Naive thymus-derived CD4-positive, alpha-beta T cell (primary cell): ENCODE measurements at regions of chr2 and their contacts with region 1.

Region 1: GRCh38 chr2:241149925-241150659 is at the start of gene PPP1R7:
- DNase-seq: peak; percentile 83 to 96 (median 93)
- ATAC-seq: peak; percentile 87
- H3K4me3 ChIP-seq: peak within 1 kb of the TSS; percentile 97
- H3K4me3 Mint-ChIP-seq: peak within 1 kb of the TSS; percentile 95 to 100 (median 98)
- H3K27ac ChIP-seq: peak within 1 kb of the TSS; percentile 71
- H3K27ac Mint-ChIP-seq: peak within 1 kb of the TSS; percentile 85 to 97 (median 94)
- H3K4me1 ChIP-seq: peaks cover 13 to 26% of the 10 kb centered on the region in 2 donors
- H3K4me1 Mint-ChIP-seq: peaks cover 33 to 58% (median 51%) of the 10 kb centered on the region in 7 donors
- H3K27me3 ChIP-seq: no peaks in the 10 kb centered on the region
- H3K27me3 Mint-ChIP-seq: no peaks in the 10 kb centered on the region
- total RNA-seq, gene PPP1R7: 39.2 to 105 (median 55.3) TPM

Region 2: DNA sequence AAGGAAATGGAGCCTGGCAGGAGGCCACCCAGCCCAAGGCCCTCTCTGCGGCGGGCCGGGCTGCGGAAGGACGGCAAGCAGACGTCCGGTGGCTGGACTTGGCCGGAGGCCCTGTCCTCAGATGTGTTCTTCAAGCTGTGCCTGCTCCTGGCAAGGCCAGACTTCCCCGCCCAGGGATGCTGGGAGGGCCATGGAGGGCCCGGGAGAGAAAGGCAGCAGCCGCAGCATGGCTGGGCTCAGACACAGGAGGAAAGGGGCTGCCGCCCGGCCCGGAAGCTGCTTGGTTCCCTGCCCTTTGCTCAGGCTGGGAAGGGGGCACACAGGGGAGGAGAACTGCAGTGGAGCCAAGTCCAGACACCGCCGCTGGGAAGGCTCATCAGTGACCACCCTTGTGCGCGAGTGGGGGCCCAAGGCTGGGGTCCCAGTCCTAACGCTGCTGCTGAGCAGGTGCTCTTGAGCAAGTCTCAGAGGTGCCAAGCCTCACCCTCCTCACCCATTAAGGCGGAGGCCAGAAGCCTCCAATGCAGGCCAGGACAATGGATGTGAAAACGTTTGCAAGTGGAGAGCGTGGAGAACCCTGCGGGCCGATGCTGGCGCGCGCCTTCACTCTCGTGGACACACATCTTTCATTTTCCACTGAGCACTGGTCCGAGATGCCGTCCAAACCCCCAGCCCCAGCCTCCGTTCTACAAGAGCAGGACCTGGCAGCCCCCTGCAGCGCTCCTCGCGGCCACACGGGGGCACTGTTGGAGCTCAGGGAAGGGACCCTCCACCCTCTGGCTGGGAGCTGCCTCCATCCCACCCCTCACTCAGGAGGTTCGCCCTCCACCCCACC is 236.1 kb before region 1 on chr2:
- CTCF ChIA-PET with region 1: interaction called, 10 read pairs
- POLR2A ChIA-PET with region 1: no interaction called
- intact Hi-C with region 1: loop called in 1 of 2 experiments (anchors 10 kb)
- DNase-seq: peak; percentile 29 to 72 (median 56)
- ATAC-seq: peak; percentile 63
- H3K4me3 ChIP-seq: no peak overlapping the region
- H3K4me3 Mint-ChIP-seq: no peak overlapping the region
- H3K27ac ChIP-seq: no peak overlapping the region
- H3K27ac Mint-ChIP-seq: no peak overlapping the region
- H3K4me1 ChIP-seq: no peaks in the 10 kb centered on the region
- H3K4me1 Mint-ChIP-seq: peaks cover 0 to 2% (median 0%) of the 10 kb centered on the region in 7 donors
- H3K27me3 ChIP-seq: peaks cover 3 to 4% of the 10 kb centered on the region in 2 donors
- H3K27me3 Mint-ChIP-seq: peaks cover 11 to 26% (median 15%) of the 10 kb centered on the region in 5 donors

Region 3: DNA sequence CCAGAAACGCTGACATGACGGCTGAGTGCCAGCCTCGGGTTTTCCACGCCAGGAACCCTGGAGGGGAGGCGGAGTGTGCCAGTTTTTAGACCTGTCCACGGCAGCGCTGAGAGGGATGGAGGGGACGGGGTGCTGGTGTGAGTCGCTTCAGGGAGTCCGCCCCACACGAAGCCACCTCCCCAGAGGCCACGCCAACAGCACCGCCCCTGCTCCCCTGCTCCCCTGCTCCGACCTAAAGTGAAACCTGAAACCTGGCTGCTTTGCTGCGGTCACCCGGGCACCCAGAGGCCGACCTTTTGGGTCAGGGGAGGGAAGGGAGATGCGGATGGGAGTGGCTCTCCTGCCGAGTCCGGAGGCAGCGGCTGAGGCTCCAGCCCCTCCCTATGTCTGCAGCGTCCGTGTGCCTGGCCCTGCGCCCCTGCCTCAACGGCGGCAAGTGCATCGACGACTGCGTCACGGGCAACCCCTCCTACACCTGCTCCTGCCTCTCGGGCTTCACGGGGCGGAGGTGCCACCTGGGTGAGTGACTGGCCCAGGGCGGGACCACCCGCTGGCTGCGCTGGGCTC is 113.6 kb before region 1 on chr2:
- CTCF ChIA-PET with region 1: no interaction called
- POLR2A ChIA-PET with region 1: no interaction called
- intact Hi-C with region 1: loop called (anchors 1 kb)
- DNase-seq: peak; percentile 31 to 83 (median 58)
- ATAC-seq: peak; percentile 72
- H3K4me3 ChIP-seq: peak overlapping the region; percentile 79
- H3K4me3 Mint-ChIP-seq: peak overlapping the region; percentile 60 to 88 (median 80)
- H3K27ac ChIP-seq: peak overlapping the region; percentile 66
- H3K27ac Mint-ChIP-seq: peak overlapping the region in 6 of 9 donors; percentile 49 to 91 (median 80)
- H3K4me1 ChIP-seq: peaks cover 7 to 10% of the 10 kb centered on the region in 2 donors
- H3K4me1 Mint-ChIP-seq: peaks cover 0 to 24% (median 6%) of the 10 kb centered on the region in 7 donors
- H3K27me3 ChIP-seq: no peaks in the 10 kb centered on the region
- H3K27me3 Mint-ChIP-seq: no peaks in the 10 kb centered on the region

Region 4: GRCh38 chr2:241102239-241102803 is 47.8 kb before region 1 on chr2 and contains the start of gene MTERF4:
- CTCF ChIA-PET with region 1: interaction called, 10 read pairs
- POLR2A ChIA-PET with region 1: interaction called, 150 read pairs
- intact Hi-C with region 1: loop called (anchors 1 kb)
- DNase-seq: peak; percentile 80 to 91 (median 86)
- ATAC-seq: peak; percentile 98
- H3K4me3 ChIP-seq: peak within 1 kb of the TSS; percentile 89
- H3K4me3 Mint-ChIP-seq: peak within 1 kb of the TSS; percentile 86 to 99 (median 96)
- H3K27ac ChIP-seq: peak within 1 kb of the TSS; percentile 92
- H3K27ac Mint-ChIP-seq: peak within 1 kb of the TSS; percentile 96 to 99 (median 99)
- H3K4me1 ChIP-seq: peaks cover 29 to 55% of the 10 kb centered on the region in 2 donors
- H3K4me1 Mint-ChIP-seq: peaks cover 27 to 84% (median 64%) of the 10 kb centered on the region in 7 donors
- H3K27me3 ChIP-seq: no peaks in the 10 kb centered on the region
- H3K27me3 Mint-ChIP-seq: no peaks in the 10 kb centered on the region
- total RNA-seq, gene MTERF4: 45.3 to 214 (median 91.8) TPM

Region 5: DNA sequence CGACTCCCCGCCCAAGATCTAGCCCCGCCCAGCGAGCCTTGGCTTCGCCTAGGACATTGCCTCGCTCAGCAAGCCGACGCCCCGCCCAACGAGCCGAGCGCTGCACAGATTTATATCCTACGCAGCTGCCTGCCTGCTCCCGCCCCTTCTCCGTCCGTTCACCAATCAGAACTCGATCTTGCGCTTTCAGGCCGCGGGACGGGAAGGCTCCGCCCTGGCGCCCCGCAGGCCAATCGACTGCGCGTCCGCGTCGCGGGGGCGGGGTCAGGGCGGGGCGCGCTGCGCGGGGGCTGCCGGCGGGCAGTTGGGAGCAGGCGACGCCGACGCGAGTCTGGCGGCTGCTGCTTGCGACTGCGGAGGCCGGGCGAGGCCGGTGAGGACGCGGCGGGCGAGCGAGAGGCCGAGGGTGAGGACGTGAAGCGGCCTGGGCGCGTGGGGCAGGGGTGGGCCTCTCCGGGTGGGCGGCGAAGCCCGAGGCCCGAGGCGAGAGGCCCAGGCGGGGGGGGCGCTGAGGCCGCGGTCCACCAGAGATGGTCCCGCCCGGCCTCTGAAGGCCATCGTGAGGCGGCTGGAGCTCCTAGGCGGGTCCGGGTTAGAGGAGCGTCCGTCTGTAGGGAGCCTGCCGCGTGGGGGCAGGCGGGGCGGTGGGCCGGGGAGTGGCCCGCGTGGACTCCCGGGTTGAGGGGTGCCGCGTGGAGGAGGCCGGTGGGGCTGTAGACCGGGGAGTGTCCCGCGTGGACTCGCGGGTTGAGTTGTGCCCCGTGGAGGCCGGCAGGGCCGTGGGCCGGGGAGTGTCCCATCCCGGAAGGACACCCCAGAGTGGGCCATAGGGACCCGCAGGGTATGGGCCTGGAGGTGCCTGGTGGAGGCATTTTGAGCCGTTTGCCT is 206.1 kb after region 1 on chr2 and contains the start of gene FARP2:
- CTCF ChIA-PET with region 1: no interaction called
- POLR2A ChIA-PET with region 1: no interaction called
- intact Hi-C with region 1: loop called (anchors 1 kb)
- DNase-seq: peak; percentile 91 to 99 (median 97)
- ATAC-seq: peak; percentile 93
- H3K4me3 ChIP-seq: peak within 1 kb of the TSS; percentile 54
- H3K4me3 Mint-ChIP-seq: peak within 1 kb of the TSS; percentile 75 to 92 (median 85)
- H3K27ac ChIP-seq: peak within 1 kb of the TSS; percentile 72
- H3K27ac Mint-ChIP-seq: peak within 1 kb of the TSS in 8 of 9 donors; percentile 80 to 95 (median 90)
- H3K4me1 ChIP-seq: peaks cover 6 to 7% of the 10 kb centered on the region in 2 donors
- H3K4me1 Mint-ChIP-seq: peaks cover 5 to 34% (median 19%) of the 10 kb centered on the region in 7 donors
- H3K27me3 ChIP-seq: no peaks in the 10 kb centered on the region
- H3K27me3 Mint-ChIP-seq: no peaks in the 10 kb centered on the region
- total RNA-seq, gene FARP2: 12.4 to 31.0 (median 22.1) TPM